ENCODE measurements at regions of chrX and their contacts with region 1.

Region 1: GRCh38 chrX:100768679-100769338 is 36.9 kb upstream of the SYTL4 start:
- DNase-seq: peak; percentile 71 to 80 (median 77)
- ATAC-seq: peak; percentile 74
- H3K4me3 ChIP-seq: no peak overlapping the region
- H3K27ac ChIP-seq: no peak overlapping the region
- H3K4me1 ChIP-seq: no peaks in the 10 kb centered on the region
- H3K27me3 ChIP-seq: no peaks in the 10 kb centered on the region
- CTCF ChIP-seq: peak; percentile 96 to 100 (median 100)
- EP300 ChIP-seq: no peak
- POLR2A ChIP-seq: no peak
- RAD21 ChIP-seq: peak; percentile 94 to 98

Region 2: DNA sequence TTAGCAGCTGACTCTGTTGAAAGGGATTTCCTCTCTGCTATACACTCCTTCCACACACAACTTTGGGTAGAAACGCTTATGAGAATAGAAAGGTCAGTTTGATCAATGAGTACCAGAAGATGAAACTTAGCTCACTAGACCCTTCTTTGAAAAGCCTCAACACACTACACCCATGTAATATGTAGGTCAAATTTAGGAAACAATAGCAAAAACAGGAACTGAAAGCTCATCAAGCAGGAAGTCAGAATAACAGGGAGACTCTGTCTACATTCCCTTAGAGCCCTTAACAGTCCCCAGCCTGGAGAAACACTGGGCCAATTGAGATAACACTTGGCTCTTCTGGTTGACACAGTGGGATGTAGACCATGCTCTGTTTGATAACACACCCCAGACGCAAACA is 94.1 kb before region 1 on chrX:
- CTCF ChIA-PET with region 1: interaction called, 12 read pairs
- POLR2A ChIA-PET with region 1: no interaction called
- in situ Hi-C with region 1: no loop called
- intact Hi-C with region 1: no loop called
- DNase-seq: peak in 2 of 4 experiments; percentile 11 to 16
- ATAC-seq: no peak
- H3K4me3 ChIP-seq: no peak overlapping the region
- H3K27ac ChIP-seq: no peak overlapping the region
- H3K4me1 ChIP-seq: no peaks in the 10 kb centered on the region
- H3K27me3 ChIP-seq: no peaks in the 10 kb centered on the region
- CTCF ChIP-seq: no peak
- EP300 ChIP-seq: no peak
- POLR2A ChIP-seq: no peak
- RAD21 ChIP-seq: no peak